Mammary epithelial cell (primary cell): ENCODE measurements at regions of chr14 and their contacts with region 1.

Region 1: DNA sequence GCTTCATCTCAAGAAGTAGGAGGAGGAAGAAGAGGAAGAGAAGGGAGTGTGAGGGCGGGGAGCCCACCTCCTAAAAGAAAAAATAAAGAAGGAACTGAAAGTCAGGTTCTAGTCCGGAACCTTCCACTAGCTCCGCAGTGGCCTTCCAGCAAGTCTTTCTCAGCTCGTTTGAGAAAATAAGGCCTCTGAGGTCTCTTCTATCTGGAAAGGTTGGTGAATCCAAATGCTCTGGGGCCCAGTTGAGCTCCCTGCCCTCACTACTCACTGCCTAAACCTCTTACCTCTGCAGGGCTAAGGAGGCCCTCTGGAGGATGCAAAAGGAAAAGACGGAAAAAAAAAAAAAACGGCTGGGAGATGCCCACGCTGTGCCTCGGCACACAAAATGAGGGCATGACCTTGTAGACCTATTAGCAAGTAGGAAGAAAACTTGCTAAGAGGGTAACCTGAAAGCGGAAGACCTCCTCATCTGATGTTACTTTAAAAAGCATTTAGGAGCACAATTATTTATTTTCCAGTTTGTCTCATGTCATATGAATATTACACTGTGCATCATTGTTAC is 35.9 kb downstream of the FBLN5 start:
- DNase-seq: peak; percentile 35
- H3K4me3 ChIP-seq: no peak overlapping the region
- H3K27ac ChIP-seq: no peak overlapping the region
- H3K4me1 ChIP-seq: no peaks in the 10 kb centered on the region
- H3K27me3 ChIP-seq: no peaks in the 10 kb centered on the region
- CTCF ChIP-seq: peak; percentile 27 to 82

Region 2: DNA sequence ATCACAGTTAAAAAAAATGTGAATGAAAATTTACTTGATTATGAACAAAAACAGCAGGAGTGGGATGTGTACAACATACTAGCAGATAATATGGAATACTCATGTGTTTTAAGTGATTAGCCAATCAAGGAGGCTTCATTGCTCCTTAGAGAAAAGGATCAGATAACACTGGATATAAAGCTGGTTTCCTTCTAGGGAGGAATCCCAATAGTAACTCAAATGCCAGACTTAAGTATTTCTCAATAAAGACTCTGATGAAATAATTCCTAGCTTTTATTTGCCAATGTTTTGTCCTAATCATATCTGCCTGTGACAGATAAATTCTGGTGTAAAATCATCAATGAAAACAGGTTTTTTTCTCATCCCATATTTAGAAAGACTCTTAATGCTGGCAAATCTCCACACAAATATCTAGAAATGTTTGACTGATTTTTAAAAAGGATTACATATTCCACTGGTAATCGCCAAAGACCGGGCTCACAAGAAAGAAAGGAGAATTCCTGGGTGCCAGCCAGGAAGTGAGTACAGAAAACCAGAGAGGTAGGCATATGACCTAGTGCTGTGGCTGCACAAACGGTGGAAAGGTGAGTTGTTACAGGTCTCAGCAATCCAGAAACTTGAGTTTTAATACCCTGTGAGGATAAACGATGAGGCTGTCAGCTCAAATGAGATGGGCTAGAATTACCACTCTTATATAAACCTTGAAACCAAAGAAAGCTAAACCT is 986.8 kb before region 1 on chr14:
- CTCF ChIA-PET with region 1: interaction called, 20 read pairs
- dilution Hi-C with region 1: no loop called
- in situ Hi-C with region 1: no loop called
- intact Hi-C with region 1: no loop called
- DNase-seq: peak; percentile 23
- H3K4me3 ChIP-seq: no peak overlapping the region
- H3K27ac ChIP-seq: no peak overlapping the region
- H3K4me1 ChIP-seq: no peaks in the 10 kb centered on the region
- H3K27me3 ChIP-seq: no peaks in the 10 kb centered on the region
- CTCF ChIP-seq: no peak

Region 3: GRCh38 chr14:91586410-91586809 is 325.1 kb before region 1 on chr14:
- CTCF ChIA-PET with region 1: interaction called, 19 read pairs
- dilution Hi-C with region 1: no loop called
- in situ Hi-C with region 1: no loop called
- intact Hi-C with region 1: no loop called
- DNase-seq: peak; percentile 11
- H3K4me3 ChIP-seq: no peak overlapping the region
- H3K27ac ChIP-seq: no peak overlapping the region
- H3K4me1 ChIP-seq: no peaks in the 10 kb centered on the region
- H3K27me3 ChIP-seq: no peaks in the 10 kb centered on the region
- CTCF ChIP-seq: no peak

Region 4: GRCh38 chr14:91674916-91675315 is 236.6 kb before region 1 on chr14:
- CTCF ChIA-PET with region 1: interaction called, 10 read pairs
- dilution Hi-C with region 1: no loop called
- in situ Hi-C with region 1: no loop called
- intact Hi-C with region 1: no loop called
- DNase-seq: no peak
- H3K4me3 ChIP-seq: no peak overlapping the region
- H3K27ac ChIP-seq: no peak overlapping the region
- H3K4me1 ChIP-seq: no peaks in the 10 kb centered on the region
- H3K27me3 ChIP-seq: no peaks in the 10 kb centered on the region
- CTCF ChIP-seq: no peak

Region 5: GRCh38 chr14:91925001-91925726 is 13.6 kb after region 1 on chr14:
- CTCF ChIA-PET with region 1: interaction called, 23 read pairs
- dilution Hi-C with region 1: no loop called
- in situ Hi-C with region 1: no loop called
- intact Hi-C with region 1: no loop called
- DNase-seq: peak; percentile 33
- H3K4me3 ChIP-seq: no peak overlapping the region
- H3K27ac ChIP-seq: no peak overlapping the region
- H3K4me1 ChIP-seq: peaks cover 8% of the 10 kb centered on the region
- H3K27me3 ChIP-seq: no peaks in the 10 kb centered on the region
- CTCF ChIP-seq: no peak

Region 6: DNA sequence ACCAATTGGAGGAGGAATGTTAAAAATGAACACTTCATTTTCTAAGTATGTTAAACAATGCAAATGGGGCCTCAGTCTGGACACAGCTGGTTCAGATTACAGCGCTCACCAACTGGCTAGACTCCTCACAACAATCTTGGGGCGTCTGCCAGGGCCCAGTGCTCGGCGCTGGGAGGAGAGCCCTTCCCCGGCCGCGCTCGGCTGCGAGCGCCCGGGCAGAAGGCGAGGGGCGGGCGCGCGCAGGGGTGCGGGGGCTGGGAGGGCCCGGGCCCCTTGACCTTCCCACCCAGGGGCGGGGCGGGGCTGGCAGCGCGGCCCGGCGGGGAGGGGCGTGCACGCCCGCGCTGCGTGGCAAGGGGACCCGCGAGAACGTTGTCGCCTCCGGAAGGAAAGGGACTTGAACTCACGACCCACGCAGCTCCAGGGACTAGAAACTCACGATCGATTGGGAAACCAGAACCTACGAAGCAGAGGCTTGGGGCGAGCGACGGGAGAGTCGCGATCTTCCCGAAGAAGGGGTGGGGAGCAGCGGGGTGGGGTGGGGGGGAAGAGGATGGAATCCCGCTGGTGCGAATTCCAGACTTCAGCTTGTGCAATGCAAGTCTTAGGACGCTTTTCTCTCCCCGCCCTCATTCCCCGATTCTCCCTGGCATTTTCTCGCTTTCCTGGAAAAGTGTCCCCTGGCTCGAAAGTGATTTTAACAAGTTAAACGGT is 36.1 kb after region 1 on chr14 and contains the start of gene FBLN5:
- CTCF ChIA-PET with region 1: no interaction called
- dilution Hi-C with region 1: no loop called
- in situ Hi-C with region 1: no loop called
- intact Hi-C with region 1: no loop called
- DNase-seq: peak; percentile 41
- H3K4me3 ChIP-seq: peak within 1 kb of the TSS; percentile 38 to 61 (median 53)
- H3K27ac ChIP-seq: no peak within 1 kb of the TSS
- H3K4me1 ChIP-seq: peaks cover 2% of the 10 kb centered on the region
- H3K27me3 ChIP-seq: peaks cover 13% of the 10 kb centered on the region
- CTCF ChIP-seq: no peak
- total RNA-seq, gene FBLN5: 1.1 to 5.7 TPM

Region 7: GRCh38 chr14:92121670-92122350 is 210.3 kb after region 1 on chr14 and contains the starts of genes CPSF2 and NDUFB1:
- CTCF ChIA-PET with region 1: no interaction called
- dilution Hi-C with region 1: no loop called
- in situ Hi-C with region 1: no loop called
- intact Hi-C with region 1: no loop called
- DNase-seq: peak; percentile 80
- H3K4me3 ChIP-seq: peak within 1 kb of the TSS; percentile 84 to 99 (median 99)
- H3K27ac ChIP-seq: peak within 1 kb of the TSS; percentile 90
- H3K4me1 ChIP-seq: no peaks in the 10 kb centered on the region
- H3K27me3 ChIP-seq: no peaks in the 10 kb centered on the region
- CTCF ChIP-seq: no peak
- total RNA-seq, gene CPSF2: 33.7 to 85.5 TPM
- total RNA-seq, gene NDUFB1: 79.9 to 110 TPM